ENCODE measurements at regions of chr2 and their contacts with region 1.

Region 1: GRCh38 chr2:232697100-232697865 is at the start of gene GIGYF2:
- DNase-seq: peak; percentile 90 to 97 (median 94)
- H3K4me3 ChIP-seq: peak within 1 kb of the TSS; percentile 68 to 100 (median 95)
- H3K27ac ChIP-seq: peak within 1 kb of the TSS; percentile 79 to 98 (median 94)
- H3K27me3 ChIP-seq: no peaks in the 10 kb centered on the region
- CTCF ChIP-seq: peak in 25 of 56 donors; percentile 4 to 47 (median 18)
- total RNA-seq, gene GIGYF2: 78.1 to 153 (median 103) TPM

Region 2: DNA sequence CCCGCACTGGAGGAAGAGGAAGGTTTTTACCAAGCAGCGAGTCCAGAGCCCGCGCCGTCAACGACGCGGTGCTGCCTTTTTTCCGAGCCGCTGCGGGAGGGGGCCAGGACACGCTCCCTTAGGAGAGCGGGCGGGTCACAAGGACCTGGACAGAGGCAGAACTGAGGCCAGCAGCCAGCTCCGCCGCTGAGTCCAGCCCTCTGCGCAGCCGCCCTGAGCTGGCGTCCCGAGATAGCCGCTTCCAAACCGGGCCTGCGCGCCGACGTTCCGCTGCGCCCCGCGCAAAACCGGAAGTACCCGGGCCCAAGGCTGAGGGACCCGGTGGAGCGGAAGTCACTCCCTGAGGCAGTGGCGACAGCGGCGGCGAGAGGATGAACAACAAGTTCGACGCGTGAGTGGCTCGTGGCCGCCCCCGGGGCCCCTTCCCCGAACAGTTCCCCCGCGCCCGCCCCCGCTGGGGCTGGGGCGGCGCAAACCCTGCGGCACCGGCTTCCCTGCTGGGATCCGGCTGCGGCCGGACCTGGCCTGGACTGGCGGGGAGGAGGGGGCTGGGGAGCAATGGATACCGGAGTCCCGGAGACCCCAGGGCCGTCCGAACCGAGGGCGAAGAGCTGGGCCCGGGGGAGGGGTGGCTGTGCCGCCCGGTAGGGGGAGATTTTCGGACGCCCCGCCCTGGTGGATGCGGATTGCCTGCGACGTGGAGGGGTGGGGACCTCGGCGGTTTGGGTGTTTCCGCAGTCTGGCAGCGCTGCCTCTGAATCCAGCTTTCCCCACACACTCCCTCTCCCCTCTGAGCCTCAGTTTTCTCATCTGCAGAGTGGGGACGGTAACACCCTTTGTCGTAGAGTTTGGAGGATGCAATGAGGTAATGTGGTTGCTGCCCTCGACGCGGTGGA is 146.7 kb before region 1 on chr2 and contains the starts of genes EIF4E2 and TIGD1:
- intact Hi-C with region 1: loop called in 1 of 2 experiments (anchors 5 kb)
- DNase-seq: peak; percentile 88 to 97 (median 93)
- H3K4me3 ChIP-seq: peak within 1 kb of the TSS; percentile 62 to 99 (median 92)
- H3K27ac ChIP-seq: peak within 1 kb of the TSS; percentile 69 to 98 (median 93)
- H3K27me3 ChIP-seq: no peaks in the 10 kb centered on the region
- CTCF ChIP-seq: peak in 53 of 56 donors; percentile 20 to 72 (median 51)
- total RNA-seq, gene EIF4E2: 38.9 to 64.3 (median 51.5) TPM
- total RNA-seq, gene TIGD1: 4.1 to 10.9 (median 6.5) TPM

Region 3: DNA sequence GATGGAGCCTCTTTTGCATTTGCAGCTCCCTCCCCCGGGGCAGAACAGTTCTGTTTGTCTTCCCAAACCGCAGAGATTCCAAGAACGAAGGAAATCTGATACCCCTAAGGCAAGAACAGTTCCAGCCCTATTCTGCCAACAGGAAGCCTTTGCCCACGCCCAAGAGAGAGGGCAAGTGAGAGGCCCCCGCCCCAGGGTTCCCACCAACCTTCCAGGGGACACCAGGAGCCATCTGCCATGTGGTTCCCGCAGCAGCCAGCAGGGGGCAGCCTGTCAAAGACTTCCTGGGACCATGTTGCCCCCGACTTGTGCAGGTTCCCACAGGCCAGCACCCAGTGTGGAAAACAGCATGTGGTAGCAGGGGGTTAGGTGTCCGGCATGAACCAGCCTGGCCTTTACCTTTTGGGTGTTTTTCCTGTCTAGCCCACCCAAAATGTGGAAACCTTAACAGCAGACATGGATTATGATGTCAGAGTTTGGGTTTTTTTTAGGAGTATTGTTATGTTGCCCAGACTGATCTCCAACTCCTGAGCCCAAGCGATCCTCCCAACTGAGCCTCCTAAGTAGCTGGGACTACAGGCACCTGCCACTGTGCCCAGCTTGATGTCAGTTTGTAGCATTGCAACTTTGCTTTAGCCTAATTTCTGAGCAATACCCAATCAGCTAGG is 85.6 kb before region 1 on chr2:
- intact Hi-C with region 1: loop called (anchors 2 to 5 kb)
- DNase-seq: peak in 9 of 10 donors; percentile 31 to 88 (median 76)
- H3K4me3 ChIP-seq: no peak overlapping the region
- H3K27ac ChIP-seq: peak overlapping the region in 43 of 59 donors; percentile 2 to 79 (median 51)
- H3K27me3 ChIP-seq: no peaks in the 10 kb centered on the region
- CTCF ChIP-seq: peak; percentile 49 to 93 (median 86)

Region 4: GRCh38 chr2:232979871-232980461 is 282.7 kb after region 1 on chr2:
- intact Hi-C with region 1: no loop called
- DNase-seq: peak in 1 of 10 donors; percentile 39
- H3K4me3 ChIP-seq: no peak overlapping the region
- H3K27ac ChIP-seq: no peak overlapping the region
- H3K27me3 ChIP-seq: peaks cover 0 to 3% (median 0%) of the 10 kb centered on the region in 45 donors
- CTCF ChIP-seq: no peak